ENCODE measurements at regions of chr20 and their contacts with region 1.

Region 1: DNA sequence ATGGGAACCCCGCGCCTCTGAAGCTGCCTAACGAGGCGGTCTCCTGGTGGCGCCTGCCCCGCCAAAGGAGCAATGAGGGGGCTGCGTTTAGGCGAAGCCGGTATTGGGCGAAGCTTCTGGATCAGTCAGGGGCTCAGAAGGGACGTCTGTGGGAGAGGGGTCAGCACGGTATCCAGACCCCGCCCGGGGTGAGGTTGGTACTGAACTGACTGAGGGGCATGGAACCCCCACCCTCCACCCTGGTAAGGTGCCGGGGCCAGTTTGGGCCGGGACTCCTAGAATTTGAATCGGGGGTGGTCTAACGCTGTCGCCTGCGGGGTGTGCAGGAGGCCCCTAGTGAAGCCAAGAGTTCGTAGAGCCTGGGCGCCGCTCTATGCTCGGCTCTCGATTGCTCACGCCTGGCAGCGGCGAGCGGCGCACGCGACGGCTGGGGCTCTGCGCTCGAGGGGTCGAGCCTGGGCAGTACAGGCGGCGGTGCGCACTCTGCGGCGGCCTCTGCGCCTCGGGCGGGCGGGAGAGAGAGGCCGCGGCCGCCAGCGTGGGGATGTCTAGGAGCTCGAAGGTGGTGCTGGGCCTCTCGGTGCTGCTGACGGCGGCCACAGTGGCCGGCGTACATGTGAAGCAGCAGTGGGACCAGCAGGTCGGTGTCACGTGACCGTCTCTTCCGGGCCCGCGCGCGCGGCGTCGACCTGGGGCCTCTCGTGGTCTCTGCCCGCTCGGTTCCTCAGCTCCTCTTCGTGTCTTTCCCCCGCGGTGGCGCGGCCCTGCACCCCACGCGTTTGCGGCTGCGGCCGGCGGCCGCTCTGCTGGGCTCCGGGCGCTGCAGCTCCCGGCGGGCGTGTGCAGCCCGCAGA is at the starts of genes KAT14 and PET117:
- DNase-seq: peak; percentile 94
- ATAC-seq: peak; percentile 91
- H3K4me3 Mint-ChIP-seq: peak within 1 kb of the TSS; percentile 74
- H3K27ac Mint-ChIP-seq: peak within 1 kb of the TSS; percentile 89
- H3K4me1 Mint-ChIP-seq: peaks cover 32% of the 10 kb centered on the region
- H3K27me3 Mint-ChIP-seq: peaks cover 1% of the 10 kb centered on the region
- total RNA-seq, gene KAT14: 17.2 to 17.9 TPM
- total RNA-seq, gene PET117: 12.0 to 18.7 TPM

Region 2: DNA sequence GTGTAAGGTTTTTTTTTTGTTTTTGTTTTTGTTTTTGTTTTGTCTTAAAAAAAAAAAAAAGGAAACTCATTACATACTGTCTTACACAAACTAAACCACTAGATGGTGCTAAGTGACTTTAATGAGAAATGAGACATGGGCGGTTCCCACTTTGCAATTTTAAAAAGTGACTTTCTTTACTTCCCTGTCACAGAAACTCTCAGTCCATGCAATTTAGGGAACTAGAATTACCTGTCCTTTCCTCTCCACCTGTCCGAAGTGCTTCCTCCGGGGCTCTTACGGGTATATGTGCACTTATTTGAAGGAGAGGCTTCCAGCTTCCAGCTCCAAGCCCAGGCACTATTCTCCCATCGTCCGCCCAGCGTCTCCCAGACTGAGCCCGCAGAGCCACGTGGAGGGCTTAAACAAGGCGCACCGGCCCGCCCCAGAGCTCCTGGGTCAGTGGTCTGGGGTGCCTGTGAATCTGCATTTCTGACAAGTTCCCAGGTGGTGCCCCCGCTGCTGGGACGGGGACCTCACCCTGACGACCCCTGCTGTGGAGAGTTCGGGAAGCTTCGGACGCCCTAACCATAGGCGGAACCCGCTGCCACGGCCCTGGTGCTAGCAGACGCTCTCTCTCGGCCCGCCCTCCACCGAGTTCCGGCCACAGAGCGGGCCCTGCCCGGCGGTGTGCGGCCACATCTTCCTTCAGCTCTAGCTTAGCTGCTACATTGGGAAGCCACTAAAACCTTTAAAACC is 632.6 kb before region 1 on chr20:
- CTCF ChIA-PET with region 1: no interaction called
- POLR2A ChIA-PET with region 1: no interaction called
- intact Hi-C with region 1: loop called in 1 of 2 experiments (anchors 10 kb)
- DNase-seq: peak; percentile 53
- ATAC-seq: peak; percentile 68
- H3K4me3 Mint-ChIP-seq: peak overlapping the region; percentile 70
- H3K27ac Mint-ChIP-seq: peak overlapping the region; percentile 80
- H3K4me1 Mint-ChIP-seq: peaks cover 27% of the 10 kb centered on the region
- H3K27me3 Mint-ChIP-seq: no peaks in the 10 kb centered on the region

Region 3: DNA sequence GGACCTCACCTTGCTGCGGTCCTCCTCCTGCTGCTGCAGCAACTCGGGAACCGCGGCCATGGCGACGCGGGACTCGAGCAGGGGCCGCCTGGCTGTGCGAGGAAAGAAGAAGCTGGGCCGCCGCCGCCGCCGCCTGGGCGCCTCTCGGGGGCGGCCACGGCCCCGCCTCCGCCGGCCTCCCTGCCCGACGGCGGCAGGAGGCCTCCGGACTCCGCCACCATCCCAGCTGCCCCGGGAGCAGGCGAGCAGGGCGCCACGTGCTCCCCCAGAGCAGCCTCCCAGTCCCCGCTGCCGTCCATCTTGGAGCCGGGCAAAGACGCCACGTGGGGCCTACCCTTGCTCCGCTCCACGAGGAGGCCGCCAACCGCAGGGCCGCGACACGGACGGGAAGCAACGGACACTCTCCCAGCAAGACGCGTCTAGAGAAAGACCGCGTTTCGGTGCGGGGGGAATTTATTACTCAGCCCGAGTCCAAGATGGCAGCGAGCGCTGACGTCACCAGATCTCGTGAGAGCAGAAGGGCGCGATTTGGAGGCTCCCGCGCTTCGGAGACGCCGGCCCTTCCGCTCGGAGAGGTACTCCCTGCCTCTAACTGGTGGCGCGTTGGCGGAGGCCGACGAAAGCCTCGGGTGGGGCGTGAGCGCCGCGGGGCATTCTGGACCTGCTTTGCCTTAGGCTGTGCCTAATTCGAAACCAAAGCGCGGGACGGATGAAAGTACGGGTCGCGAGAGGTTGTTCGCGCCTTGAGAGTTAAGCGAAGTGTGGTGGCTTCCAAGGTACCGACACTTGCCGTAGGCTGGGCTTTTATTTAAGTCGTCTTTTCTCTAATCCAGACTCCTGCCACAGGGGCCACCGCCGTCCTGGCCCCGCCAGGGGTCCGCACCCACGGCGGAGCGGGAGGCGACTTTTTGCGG is 169.0 kb before region 1 on chr20 and contains the starts of genes MGME1 and SNX5:
- CTCF ChIA-PET with region 1: no interaction called
- POLR2A ChIA-PET with region 1: no interaction called
- intact Hi-C with region 1: loop called (anchors 1 to 2 kb)
- DNase-seq: peak; percentile 100
- ATAC-seq: peak; percentile 91
- H3K4me3 Mint-ChIP-seq: peak within 1 kb of the TSS; percentile 87
- H3K27ac Mint-ChIP-seq: peak within 1 kb of the TSS; percentile 99
- H3K4me1 Mint-ChIP-seq: peaks cover 49% of the 10 kb centered on the region
- H3K27me3 Mint-ChIP-seq: no peaks in the 10 kb centered on the region
- total RNA-seq, gene MGME1: 24.1 to 29.7 TPM
- total RNA-seq, gene SNX5: 204 to 227 TPM

Region 4: DNA sequence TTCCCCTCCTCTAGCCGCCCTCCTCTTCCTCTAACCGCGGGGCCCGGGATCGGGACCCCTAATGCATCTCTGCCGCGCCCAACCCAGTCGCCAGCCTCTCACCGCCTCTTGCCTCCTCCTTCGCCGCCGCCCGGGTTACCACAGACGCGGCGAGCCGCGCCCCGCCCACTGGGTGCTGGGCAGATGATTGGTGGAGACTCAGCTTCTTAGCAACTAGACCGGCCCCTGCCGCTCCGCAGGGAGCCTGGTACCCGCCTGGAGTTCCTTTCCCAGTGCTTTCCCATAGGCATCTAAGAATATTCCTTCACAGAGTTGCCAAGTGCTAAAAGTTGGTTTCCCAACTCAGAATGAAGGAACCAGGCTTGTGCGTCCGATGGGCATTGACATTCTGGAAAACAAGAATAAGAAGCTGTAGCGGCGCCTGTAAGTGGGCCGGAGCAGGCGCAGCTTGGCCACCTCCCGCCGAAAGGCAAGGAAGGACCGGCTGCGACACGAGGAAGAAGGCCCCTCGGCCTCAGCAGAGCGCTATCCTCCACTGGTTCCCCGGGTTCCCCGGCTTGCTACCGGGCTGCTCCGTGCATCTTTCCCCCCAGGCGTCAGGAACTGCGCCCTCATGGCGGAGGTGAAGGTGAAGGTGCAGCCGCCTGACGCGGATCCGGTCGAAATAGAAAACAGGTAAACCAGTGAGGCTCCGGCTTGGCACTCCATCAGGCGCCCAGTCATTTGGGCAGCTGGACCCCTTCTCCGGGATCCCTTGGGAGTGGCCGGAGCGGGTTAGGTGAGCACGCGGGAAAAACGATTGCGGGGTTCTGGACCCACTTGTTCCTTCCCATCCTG is 329.5 kb after region 1 on chr20 and contains the starts of genes DZANK1 and POLR3F:
- CTCF ChIA-PET with region 1: no interaction called
- POLR2A ChIA-PET with region 1: interaction called, 6 read pairs
- intact Hi-C with region 1: loop called in 1 of 2 experiments (anchors 1 kb)
- DNase-seq: peak; percentile 96
- ATAC-seq: peak; percentile 99
- H3K4me3 Mint-ChIP-seq: peak within 1 kb of the TSS; percentile 91
- H3K27ac Mint-ChIP-seq: peak within 1 kb of the TSS; percentile 89
- H3K4me1 Mint-ChIP-seq: peaks cover 21% of the 10 kb centered on the region
- H3K27me3 Mint-ChIP-seq: no peaks in the 10 kb centered on the region
- total RNA-seq, gene DZANK1: 1.4 to 2.0 TPM
- total RNA-seq, gene POLR3F: 9.8 to 11.8 TPM

Region 5: GRCh38 chr20:18566892-18567742 is 429.5 kb after region 1 on chr20 and contains the start of gene SMIM26:
- CTCF ChIA-PET with region 1: no interaction called
- POLR2A ChIA-PET with region 1: no interaction called
- intact Hi-C with region 1: loop called in 1 of 2 experiments (anchors 5 kb)
- DNase-seq: peak; percentile 97
- ATAC-seq: peak; percentile 100
- H3K4me3 Mint-ChIP-seq: peak within 1 kb of the TSS; percentile 98
- H3K27ac Mint-ChIP-seq: peak within 1 kb of the TSS; percentile 92
- H3K4me1 Mint-ChIP-seq: peaks cover 13% of the 10 kb centered on the region
- H3K27me3 Mint-ChIP-seq: no peaks in the 10 kb centered on the region
- total RNA-seq, gene SMIM26: 64.4 to 66.2 TPM

Region 6: DNA sequence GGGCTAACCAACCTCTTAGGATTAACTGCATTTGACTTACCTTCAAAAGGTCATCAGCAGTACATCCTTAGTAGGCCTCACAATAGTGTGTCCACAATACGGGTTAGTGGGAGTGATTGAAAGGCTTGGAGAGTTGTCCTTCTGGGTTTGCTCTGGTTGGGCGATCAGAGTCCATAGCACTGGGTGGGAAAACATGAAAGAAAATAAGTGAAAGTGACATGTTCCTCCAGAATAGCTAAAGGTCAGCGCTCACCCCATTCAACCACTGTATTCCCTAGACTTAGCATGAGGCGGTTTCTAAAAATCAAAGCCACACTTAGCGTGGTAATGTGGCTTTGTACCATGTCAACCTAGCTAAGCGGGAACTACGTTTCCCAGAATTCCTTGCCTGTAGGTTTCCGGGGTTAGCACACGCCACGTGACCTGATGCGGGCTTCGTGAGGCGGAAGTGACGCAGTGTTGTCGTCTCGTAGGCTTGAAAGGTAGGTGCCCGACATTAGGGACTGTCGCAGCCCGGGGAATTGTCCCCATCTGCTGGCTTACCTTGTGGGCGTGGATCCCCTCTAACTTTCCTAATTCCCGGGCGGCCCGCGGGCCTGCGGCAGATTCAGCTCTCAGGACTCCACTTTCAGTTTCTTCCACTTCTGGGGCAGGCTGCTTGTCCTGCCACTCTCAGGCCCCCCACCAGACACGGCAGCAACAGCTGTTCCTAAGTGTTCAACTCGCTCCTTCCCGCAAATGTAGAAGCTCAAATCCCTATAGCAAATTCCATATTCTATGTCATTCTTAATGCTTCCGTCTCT is 656.2 kb after region 1 on chr20:
- CTCF ChIA-PET with region 1: no interaction called
- POLR2A ChIA-PET with region 1: no interaction called
- intact Hi-C with region 1: loop called in 1 of 2 experiments (anchors 5 kb)
- DNase-seq: peak; percentile 92
- ATAC-seq: peak; percentile 98
- H3K4me3 Mint-ChIP-seq: peak overlapping the region; percentile 87
- H3K27ac Mint-ChIP-seq: peak overlapping the region; percentile 96
- H3K4me1 Mint-ChIP-seq: peaks cover 17% of the 10 kb centered on the region
- H3K27me3 Mint-ChIP-seq: peaks cover 7% of the 10 kb centered on the region

Measured in activated CD4-positive, alpha-beta T cell treated with anti-CD3 and anti-CD28 coated beads for 36 hours (primary cell).